HepG2 (cell line): ENCODE measurements at regions of chr5 and their contacts with region 1.

Region 1: GRCh38 chr5:157130925-157131324 is 11.7 kb downstream of the MED7 start:
- DNase-seq: no peak
- ATAC-seq: no peak
- H3K4me3 ChIP-seq: no peak overlapping the region
- H3K27ac ChIP-seq: no peak overlapping the region
- H3K4me1 ChIP-seq: peaks cover 24% of the 10 kb centered on the region; the same call in 1 of the 2 replicates
- H3K27me3 ChIP-seq: no peaks in the 10 kb centered on the region
- CTCF ChIP-seq: no peak
- EP300 ChIP-seq: no peak
- POLR2A ChIP-seq: no peak
- RAD21 ChIP-seq: no peak

Region 2: GRCh38 chr5:155616779-155617392 is 1514.0 kb before region 1 on chr5:
- CTCF ChIA-PET with region 1: no interaction called
- POLR2A ChIA-PET with region 1: no interaction called
- in situ Hi-C with region 1: no loop called
- intact Hi-C with region 1: loop called (anchors 10 kb)
- DNase-seq: peak; percentile 13
- ATAC-seq: peak; percentile 83
- H3K4me3 ChIP-seq: no peak overlapping the region
- H3K27ac ChIP-seq: no peak overlapping the region
- H3K4me1 ChIP-seq: no peaks in the 10 kb centered on the region
- H3K27me3 ChIP-seq: no peaks in the 10 kb centered on the region
- CTCF ChIP-seq: peak; percentile 72
- EP300 ChIP-seq: no peak
- POLR2A ChIP-seq: no peak
- RAD21 ChIP-seq: peak; percentile 43; the same call in 1 of the 2 replicates

Region 3: GRCh38 chr5:156698323-156698722 is 432.6 kb before region 1 on chr5:
- CTCF ChIA-PET with region 1: no interaction called
- POLR2A ChIA-PET with region 1: no interaction called
- in situ Hi-C with region 1: loop called (anchors 25 kb)
- intact Hi-C with region 1: loop called (anchors 10 kb)
- DNase-seq: no peak
- ATAC-seq: no peak
- H3K4me3 ChIP-seq: no peak overlapping the region
- H3K27ac ChIP-seq: no peak overlapping the region
- H3K4me1 ChIP-seq: peaks cover 18% of the 10 kb centered on the region
- H3K27me3 ChIP-seq: no peaks in the 10 kb centered on the region
- CTCF ChIP-seq: no peak
- EP300 ChIP-seq: no peak
- POLR2A ChIP-seq: no peak
- RAD21 ChIP-seq: no peak

Region 4: GRCh38 chr5:156815988-156816599 is 314.8 kb before region 1 on chr5:
- CTCF ChIA-PET with region 1: interaction called, 3 read pairs
- POLR2A ChIA-PET with region 1: no interaction called
- in situ Hi-C with region 1: no loop called
- intact Hi-C with region 1: loop called (anchors 1 kb)
- DNase-seq: peak; percentile 14
- ATAC-seq: peak; percentile 71
- H3K4me3 ChIP-seq: no peak overlapping the region
- H3K27ac ChIP-seq: no peak overlapping the region
- H3K4me1 ChIP-seq: no peaks in the 10 kb centered on the region
- H3K27me3 ChIP-seq: no peaks in the 10 kb centered on the region; a peak in 1 of 5 replicates
- CTCF ChIP-seq: peak; percentile 65
- EP300 ChIP-seq: no peak
- POLR2A ChIP-seq: no peak
- RAD21 ChIP-seq: peak; percentile 34; the same call in 1 of the 2 replicates

Region 5: DNA sequence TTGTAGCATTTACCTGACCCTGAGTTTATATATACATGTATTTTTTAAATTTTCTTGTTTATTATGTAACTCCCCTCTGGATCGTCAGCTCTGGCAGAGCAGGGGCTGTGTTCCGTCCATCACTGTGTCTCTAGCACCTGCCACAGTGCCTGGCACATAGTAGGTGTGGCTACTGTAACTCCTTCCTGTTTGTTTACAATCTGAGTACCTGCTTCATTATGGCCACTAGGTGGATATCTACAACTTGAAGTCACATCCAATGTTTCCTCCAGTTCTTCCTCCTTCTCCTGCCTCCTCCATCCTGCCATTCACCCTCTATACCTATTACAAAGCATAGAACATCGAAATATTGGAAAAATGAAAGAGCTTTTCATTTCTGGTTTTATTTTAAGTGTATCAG is 295.0 kb before region 1 on chr5:
- CTCF ChIA-PET with region 1: interaction called, 3 read pairs
- POLR2A ChIA-PET with region 1: no interaction called
- in situ Hi-C with region 1: loop called (anchors 25 kb)
- intact Hi-C with region 1: loop called (anchors 5 kb)
- DNase-seq: peak; percentile 2
- ATAC-seq: no peak
- H3K4me3 ChIP-seq: no peak overlapping the region
- H3K27ac ChIP-seq: no peak overlapping the region
- H3K4me1 ChIP-seq: no peaks in the 10 kb centered on the region
- H3K27me3 ChIP-seq: no peaks in the 10 kb centered on the region
- CTCF ChIP-seq: peak; percentile 32; the same call in 1 of the 2 replicates
- EP300 ChIP-seq: no peak
- POLR2A ChIP-seq: no peak
- RAD21 ChIP-seq: no peak

Region 6: DNA sequence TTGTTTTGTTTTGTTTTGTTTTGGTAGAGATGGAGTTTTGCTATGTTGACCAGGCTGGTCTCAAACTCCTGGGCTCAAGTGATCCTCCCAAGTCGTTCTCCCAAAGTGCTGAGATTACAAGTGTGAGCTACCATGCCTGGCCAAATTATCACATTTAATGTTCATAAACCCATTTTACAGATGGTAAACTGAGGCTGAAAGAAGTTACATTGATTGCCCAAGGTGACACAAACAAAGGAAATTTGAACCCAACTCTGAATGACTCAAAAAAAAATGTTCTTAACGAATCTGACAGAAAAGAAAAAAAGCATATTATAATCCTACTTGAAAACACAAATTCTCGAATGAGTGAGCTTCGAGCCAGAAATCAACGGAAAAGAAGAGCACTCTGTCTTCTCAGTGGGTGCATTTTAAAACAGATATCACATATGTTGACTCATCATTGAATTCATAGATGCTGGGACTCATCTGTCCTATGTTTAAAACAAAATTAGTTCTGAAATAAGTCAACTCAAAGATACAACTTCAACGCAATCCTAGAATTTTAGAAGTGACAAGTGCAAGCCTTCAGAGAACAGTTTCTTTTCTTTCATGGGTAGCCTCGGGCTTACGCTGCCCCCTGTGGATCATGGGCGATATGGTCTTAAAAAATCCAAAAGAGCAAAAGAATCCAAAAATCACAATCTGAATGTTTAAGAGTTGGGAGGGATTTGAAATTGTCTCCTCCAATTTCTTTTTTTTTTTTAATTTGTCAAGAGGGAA is 196.3 kb before region 1 on chr5:
- CTCF ChIA-PET with region 1: no interaction called
- POLR2A ChIA-PET with region 1: no interaction called
- in situ Hi-C with region 1: no loop called
- intact Hi-C with region 1: loop called (anchors 5 kb)
- DNase-seq: peak; percentile 9
- ATAC-seq: 0 out of 3 replicates have a peak, but pooled peaks have one; percentile 30
- H3K4me3 ChIP-seq: no peak overlapping the region
- H3K27ac ChIP-seq: no peak overlapping the region
- H3K4me1 ChIP-seq: peaks cover 12% of the 10 kb centered on the region; the same call in 1 of the 2 replicates
- H3K27me3 ChIP-seq: no peaks in the 10 kb centered on the region; a peak in 1 of 5 replicates
- CTCF ChIP-seq: peak; percentile 52
- EP300 ChIP-seq: no peak
- POLR2A ChIP-seq: no peak
- RAD21 ChIP-seq: no peak

Region 7: DNA sequence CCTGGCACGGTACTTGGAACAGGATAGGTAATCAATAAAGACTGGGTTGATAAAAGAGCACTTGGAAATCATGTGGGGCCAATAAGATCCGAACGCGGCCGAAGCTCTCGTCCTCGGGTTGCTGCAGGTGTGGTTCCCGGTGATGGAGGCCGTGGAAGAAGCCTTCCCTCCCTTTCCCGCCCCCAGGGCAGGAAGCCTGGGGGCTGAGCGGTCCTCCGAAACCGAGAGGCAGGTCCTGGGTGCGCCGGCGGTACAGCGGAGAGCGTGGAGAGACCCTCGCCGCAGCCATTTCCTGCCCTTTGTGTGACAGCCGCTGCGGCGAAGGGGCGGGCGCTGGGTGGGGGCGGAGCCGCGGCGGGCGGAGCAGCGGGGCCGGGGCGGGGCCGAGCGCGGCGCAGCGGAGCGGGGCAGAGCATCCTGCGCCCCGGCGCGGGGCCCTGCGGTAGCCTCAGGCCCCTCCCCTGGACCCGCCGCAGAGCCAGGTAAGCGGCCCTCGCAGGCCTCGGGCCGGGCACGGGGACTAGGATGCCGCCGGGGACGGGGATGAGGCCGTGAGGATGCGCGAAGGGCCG is 134.9 kb after region 1 on chr5 and contains the start of gene CYFIP2:
- CTCF ChIA-PET with region 1: no interaction called
- POLR2A ChIA-PET with region 1: no interaction called
- in situ Hi-C with region 1: no loop called
- intact Hi-C with region 1: no loop called
- DNase-seq: no peak
- ATAC-seq: peak; percentile 94
- H3K4me3 ChIP-seq: peak within 1 kb of the TSS; percentile 74 to 84 (median 83)
- H3K27ac ChIP-seq: no peak within 1 kb of the TSS
- H3K4me1 ChIP-seq: peaks cover 58% of the 10 kb centered on the region
- H3K27me3 ChIP-seq: peaks cover 0 to 1% of the 10 kb centered on the region in 2 experiments; a peak in 2 of 5 replicates
- CTCF ChIP-seq: 0 out of 2 replicates have a peak, but pooled peaks have one; percentile 36
- EP300 ChIP-seq: no peak
- POLR2A ChIP-seq: peak in 1 of 2 experiments; percentile 73; a peak in 2 of 4 replicates
- RAD21 ChIP-seq: no peak
- total RNA-seq, gene CYFIP2: 30.3 and 40.2 TPM in 2 replicates